Endothelial cell of umbilical vein (primary cell): ENCODE measurements at regions of chr4 and their contacts with region 1.

Region 1: GRCh38 chr4:64551125-64551524 is 141.9 kb upstream of the TECRL start:
- DNase-seq: no peak
- H3K4me3 ChIP-seq: no peak overlapping the region
- H3K27ac ChIP-seq: no peak overlapping the region
- H3K4me1 ChIP-seq: no peaks in the 10 kb centered on the region
- H3K27me3 ChIP-seq: no peaks in the 10 kb centered on the region
- CTCF ChIP-seq: no peak
- POLR2A ChIP-seq: no peak

Region 2: DNA sequence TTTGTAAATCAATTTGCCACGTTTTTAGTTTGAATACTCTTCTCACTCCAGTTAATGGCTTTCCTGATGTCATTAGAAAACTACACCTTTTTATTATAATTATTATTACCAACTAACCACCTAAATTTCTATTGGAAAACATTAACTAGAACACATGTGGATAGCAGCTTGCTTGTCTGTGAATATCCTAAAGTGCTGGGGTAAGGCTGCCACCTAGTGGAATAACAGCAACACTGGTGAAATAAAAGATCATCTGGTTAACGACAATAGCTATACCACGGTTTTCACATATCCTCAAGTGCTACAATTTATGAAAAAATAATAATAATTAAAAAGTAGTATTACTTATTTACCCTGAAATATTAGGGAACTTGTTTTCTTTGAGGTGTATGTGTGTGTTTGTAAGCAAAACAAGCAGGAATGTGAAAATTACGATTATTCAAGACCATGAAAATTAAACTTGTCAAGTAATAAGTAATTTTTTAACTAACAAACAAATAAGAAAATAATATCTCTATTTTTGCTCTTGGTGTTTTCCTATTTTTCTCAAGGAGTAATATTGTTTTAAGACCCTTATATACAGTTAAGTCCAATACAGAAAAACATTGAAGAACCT is 11.8 kb before region 1 on chr4:
- CTCF ChIA-PET with region 1: interaction called, 18 read pairs
- POLR2A ChIA-PET with region 1: no interaction called
- dilution Hi-C with region 1: no loop called
- intact Hi-C with region 1: no loop called
- DNase-seq: peak; percentile 54
- H3K4me3 ChIP-seq: no peak overlapping the region
- H3K27ac ChIP-seq: no peak overlapping the region
- H3K4me1 ChIP-seq: no peaks in the 10 kb centered on the region
- H3K27me3 ChIP-seq: no peaks in the 10 kb centered on the region
- CTCF ChIP-seq: peak; percentile 42 to 61
- POLR2A ChIP-seq: no peak